ENCODE measurements at regions of chr12 and their contacts with region 1.

Region 1: GRCh38 chr12:132373901-132374611 is 44.7 kb upstream of the GALNT9 start:
- DNase-seq: no peak
- H3K4me3 ChIP-seq: no peak overlapping the region
- H3K27ac ChIP-seq: no peak overlapping the region
- H3K4me1 ChIP-seq: peaks cover 0 to 23% (median 7%) of the 10 kb centered on the region in 4 experiments; a peak in 6 of 7 replicates
- H3K27me3 ChIP-seq: peaks cover 6 to 60% (median 48%) of the 10 kb centered on the region in 4 experiments
- CTCF ChIP-seq: peak; percentile 23 to 25 (median 24); a peak in 3 of 4 replicates
- EP300 ChIP-seq: no peak
- POLR2A ChIP-seq: no peak
- RAD21 ChIP-seq: peak in 1 of 2 experiments; percentile 43; a peak in 3 of 4 replicates

Region 2: DNA sequence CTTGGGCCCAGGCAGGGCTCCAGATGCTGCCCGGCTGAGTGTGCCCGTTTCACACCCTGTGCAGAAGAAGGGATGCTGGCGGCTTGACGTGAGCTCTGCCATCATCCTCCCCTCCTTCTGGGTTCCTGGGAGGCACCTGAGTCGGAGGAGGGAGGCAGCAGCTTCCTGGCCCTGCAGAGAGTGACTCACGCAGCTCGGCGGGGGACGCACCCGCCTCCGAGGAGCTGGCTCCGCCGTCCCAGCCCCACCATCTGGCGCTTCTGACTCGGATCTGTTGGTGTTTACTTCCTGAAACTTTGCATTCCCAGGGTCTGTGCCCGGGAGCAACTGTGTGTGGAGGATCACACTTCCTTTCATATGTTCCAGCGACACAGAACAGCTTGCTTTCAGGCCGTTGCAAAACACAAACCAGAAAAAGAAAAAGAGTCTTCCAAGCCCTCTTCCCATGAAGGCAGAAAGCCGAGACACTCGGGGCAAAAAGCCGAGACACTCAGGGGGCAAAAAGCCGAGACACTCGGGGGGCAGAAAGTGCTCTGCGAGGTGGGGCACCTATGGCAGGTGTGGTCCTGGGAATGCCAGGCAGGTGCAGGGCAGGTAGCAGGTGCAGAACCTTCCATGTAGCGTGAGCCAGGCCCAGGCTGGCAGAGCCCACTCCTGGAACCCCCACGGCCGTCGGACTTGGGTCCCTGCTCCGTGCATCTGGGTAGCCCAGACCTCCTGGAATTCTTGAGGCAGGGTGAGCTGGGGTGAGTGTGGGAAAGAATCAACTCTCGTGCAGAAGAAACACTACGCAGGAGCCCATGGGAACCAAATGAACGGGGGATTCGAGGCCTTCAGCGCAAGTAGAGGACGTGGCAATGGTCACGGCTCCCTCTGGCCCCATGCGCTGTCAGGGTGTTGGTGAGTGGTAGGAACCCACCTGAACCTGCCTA is 17.1 kb before region 1 on chr12:
- CTCF ChIA-PET with region 1: interaction called, 11 read pairs
- POLR2A ChIA-PET with region 1: no interaction called
- DNase-seq: peak in 1 of 2 experiments; percentile 17
- H3K4me3 ChIP-seq: no peak overlapping the region
- H3K27ac ChIP-seq: no peak overlapping the region
- H3K4me1 ChIP-seq: peaks cover 0 to 13% (median 7%) of the 10 kb centered on the region in 4 experiments; a peak in 4 of 7 replicates
- H3K27me3 ChIP-seq: peaks cover 0 to 27% (median 13%) of the 10 kb centered on the region in 4 experiments; a peak in 4 of 7 replicates
- CTCF ChIP-seq: no peak
- EP300 ChIP-seq: no peak
- POLR2A ChIP-seq: no peak
- RAD21 ChIP-seq: no peak

Region 3: GRCh38 chr12:132385923-132386751 is 12.1 kb after region 1 on chr12:
- CTCF ChIA-PET with region 1: interaction called, 25 read pairs
- POLR2A ChIA-PET with region 1: interaction called, 9 read pairs
- DNase-seq: no peak
- H3K4me3 ChIP-seq: no peak overlapping the region
- H3K27ac ChIP-seq: no peak overlapping the region
- H3K4me1 ChIP-seq: peaks cover 0 to 26% (median 15%) of the 10 kb centered on the region in 4 experiments; a peak in 6 of 7 replicates
- H3K27me3 ChIP-seq: peaks cover 12 to 73% (median 61%) of the 10 kb centered on the region in 4 experiments
- CTCF ChIP-seq: peak in 2 of 3 experiments; percentile 15; a peak in 1 of 4 replicates
- EP300 ChIP-seq: no peak
- POLR2A ChIP-seq: no peak
- RAD21 ChIP-seq: peak in 1 of 2 experiments; percentile 27; a peak in 1 of 4 replicates